Psoas muscle (tissue), 8 donors: ENCODE measurements at regions of chr19 and their contacts with region 1.

Region 1: GRCh38 chr19:29941828-29942403 is at the start of gene URI1:
- DNase-seq: peak; percentile 94 to 95
- ATAC-seq: peak; percentile 98
- H3K4me3 ChIP-seq: peak within 1 kb of the TSS; percentile 82
- H3K27ac ChIP-seq: peak within 1 kb of the TSS; percentile 84
- H3K4me1 ChIP-seq: peaks cover 26% of the 10 kb centered on the region
- H3K27me3 ChIP-seq: peaks cover 0 to 2% (median 0%) of the 10 kb centered on the region in 3 donors
- CTCF ChIP-seq: no peak
- total RNA-seq, gene URI1: 51.4 to 70.4 (median 61.2) TPM

Region 2: DNA sequence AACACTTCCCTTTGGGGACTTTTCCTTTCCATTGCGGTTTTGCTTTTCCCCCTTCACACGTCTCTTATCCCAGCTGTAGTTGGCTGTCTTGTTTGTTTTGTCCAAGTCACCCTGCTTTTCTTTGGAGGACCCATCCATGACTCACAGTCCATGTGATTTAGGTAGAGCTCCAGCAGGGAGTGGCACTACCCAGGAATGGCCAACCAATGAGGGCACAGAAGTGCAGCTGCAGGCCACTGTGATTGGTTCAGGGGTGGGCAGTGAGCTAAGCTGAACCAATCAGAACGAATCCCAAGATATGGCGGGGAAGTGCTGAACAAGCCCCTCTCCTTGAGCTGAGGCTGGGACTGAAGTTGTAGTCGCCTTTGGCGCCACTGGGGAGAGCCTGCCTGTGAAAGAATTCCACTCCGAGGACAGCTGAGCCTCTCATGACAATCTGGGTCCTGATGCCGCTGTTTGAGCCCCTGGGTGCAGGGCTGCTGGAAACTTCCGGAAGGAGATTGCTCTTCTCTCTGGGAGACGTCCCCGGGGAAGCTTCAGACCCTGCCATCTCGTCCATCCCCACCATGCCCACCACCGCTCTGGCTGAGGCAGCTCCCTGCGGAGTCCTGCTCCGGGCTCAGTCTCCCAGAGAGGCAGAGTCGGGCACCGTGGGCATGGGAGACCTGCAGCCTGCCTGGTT is 62.8 kb before region 1 on chr19:
- intact Hi-C with region 1: loop called in 1 of 2 experiments (anchors 5 kb)
- DNase-seq: peak in 1 of 2 donors; percentile 66
- ATAC-seq: peak; percentile 65 to 81 (median 73)
- H3K4me3 ChIP-seq: no peak overlapping the region
- H3K27ac ChIP-seq: no peak overlapping the region
- H3K4me1 ChIP-seq: peaks cover 9% of the 10 kb centered on the region
- H3K27me3 ChIP-seq: no peaks in the 10 kb centered on the region
- CTCF ChIP-seq: no peak